ENCODE measurements at regions of chr5 and their contacts with region 1.

Region 1: DNA sequence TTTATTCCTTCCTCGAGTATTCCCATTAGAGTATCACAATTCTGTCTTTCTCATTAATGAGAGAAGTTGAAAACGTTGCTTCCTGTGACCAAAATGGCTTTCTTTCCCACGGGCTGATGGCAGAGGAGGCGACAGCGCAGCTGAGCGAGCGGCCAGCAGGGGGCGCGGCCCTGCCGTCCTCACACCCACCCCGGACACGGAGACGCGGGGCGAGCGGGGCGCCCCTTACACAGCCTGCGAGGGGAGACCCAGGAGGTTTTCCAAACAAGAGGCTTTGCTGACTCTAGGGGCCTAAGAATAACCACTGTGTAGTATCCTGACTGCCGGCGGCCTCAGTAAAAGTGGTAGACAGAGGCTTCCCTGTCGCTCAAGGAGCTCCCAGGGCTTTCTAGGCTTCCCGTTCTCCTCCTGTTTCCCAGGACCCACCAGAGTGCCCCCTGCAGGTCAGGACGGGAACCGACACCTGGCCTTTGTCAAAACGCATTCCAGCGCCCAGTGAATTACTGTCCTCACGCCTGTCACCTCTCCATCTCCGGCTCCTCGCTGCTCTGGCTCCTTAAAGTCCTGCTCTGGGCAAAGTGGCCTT is 27.3 kb upstream of the FGF1 start:
- DNase-seq: peak; percentile 70 to 89
- ATAC-seq: peak; percentile 89 to 93
- H3K4me3 ChIP-seq: peak overlapping the region; percentile 49
- H3K27ac ChIP-seq: peak overlapping the region; percentile 82 to 92
- H3K4me1 ChIP-seq: peaks cover 5% of the 10 kb centered on the region; the same call in 2 of the 3 replicates
- CTCF ChIP-seq: peak; percentile 100
- EP300 ChIP-seq: no peak
- POLR2A ChIP-seq: no peak
- RAD21 ChIP-seq: peak; percentile 43 to 78

Region 2: GRCh38 chr5:142618130-142618523 is 95.1 kb before region 1 on chr5:
- CTCF ChIA-PET with region 1: interaction called, 212 read pairs
- POLR2A ChIA-PET with region 1: no interaction called
- DNase-seq: no peak
- ATAC-seq: no peak
- H3K4me3 ChIP-seq: no peak overlapping the region
- H3K27ac ChIP-seq: no peak overlapping the region
- H3K4me1 ChIP-seq: peaks cover 9% of the 10 kb centered on the region
- CTCF ChIP-seq: no peak
- EP300 ChIP-seq: no peak
- POLR2A ChIP-seq: no peak
- RAD21 ChIP-seq: no peak

Region 3: GRCh38 chr5:142655339-142656267 is 57.6 kb before region 1 on chr5:
- CTCF ChIA-PET with region 1: interaction called, 104 read pairs
- POLR2A ChIA-PET with region 1: interaction called, 5 read pairs
- DNase-seq: peak; percentile 71 to 81
- ATAC-seq: peak; percentile 95 to 98
- H3K4me3 ChIP-seq: no peak overlapping the region
- H3K27ac ChIP-seq: no peak overlapping the region
- H3K4me1 ChIP-seq: peaks cover 4% of the 10 kb centered on the region; the same call in 1 of the 3 replicates
- CTCF ChIP-seq: peak; percentile 98
- EP300 ChIP-seq: no peak
- POLR2A ChIP-seq: no peak
- RAD21 ChIP-seq: peak; percentile 97

Region 4: DNA sequence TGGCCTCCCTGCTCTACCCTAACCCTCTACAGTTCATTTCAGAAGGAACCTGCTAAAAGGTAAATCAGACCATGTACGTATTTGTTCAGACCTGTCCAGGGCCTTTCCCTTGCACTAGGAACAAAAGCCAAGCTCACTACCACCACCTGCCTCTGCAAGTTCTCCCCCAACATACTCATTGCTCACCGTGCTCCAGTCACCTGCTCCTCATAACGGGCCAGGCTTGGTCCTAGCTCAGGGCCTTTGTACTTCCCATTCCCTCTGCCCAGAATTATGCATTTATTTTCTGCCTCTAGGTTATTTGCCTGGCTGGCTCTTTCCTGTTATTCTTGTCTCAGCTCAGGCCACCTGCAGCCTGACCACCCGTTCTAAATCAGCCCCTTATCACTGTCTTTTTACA is 22.5 kb before region 1 on chr5:
- CTCF ChIA-PET with region 1: interaction called, 146 read pairs
- POLR2A ChIA-PET with region 1: no interaction called
- DNase-seq: no peak
- ATAC-seq: no peak
- H3K4me3 ChIP-seq: no peak overlapping the region
- H3K27ac ChIP-seq: no peak overlapping the region
- H3K4me1 ChIP-seq: no peaks in the 10 kb centered on the region
- CTCF ChIP-seq: no peak
- EP300 ChIP-seq: no peak
- POLR2A ChIP-seq: no peak
- RAD21 ChIP-seq: no peak

Region 5: DNA sequence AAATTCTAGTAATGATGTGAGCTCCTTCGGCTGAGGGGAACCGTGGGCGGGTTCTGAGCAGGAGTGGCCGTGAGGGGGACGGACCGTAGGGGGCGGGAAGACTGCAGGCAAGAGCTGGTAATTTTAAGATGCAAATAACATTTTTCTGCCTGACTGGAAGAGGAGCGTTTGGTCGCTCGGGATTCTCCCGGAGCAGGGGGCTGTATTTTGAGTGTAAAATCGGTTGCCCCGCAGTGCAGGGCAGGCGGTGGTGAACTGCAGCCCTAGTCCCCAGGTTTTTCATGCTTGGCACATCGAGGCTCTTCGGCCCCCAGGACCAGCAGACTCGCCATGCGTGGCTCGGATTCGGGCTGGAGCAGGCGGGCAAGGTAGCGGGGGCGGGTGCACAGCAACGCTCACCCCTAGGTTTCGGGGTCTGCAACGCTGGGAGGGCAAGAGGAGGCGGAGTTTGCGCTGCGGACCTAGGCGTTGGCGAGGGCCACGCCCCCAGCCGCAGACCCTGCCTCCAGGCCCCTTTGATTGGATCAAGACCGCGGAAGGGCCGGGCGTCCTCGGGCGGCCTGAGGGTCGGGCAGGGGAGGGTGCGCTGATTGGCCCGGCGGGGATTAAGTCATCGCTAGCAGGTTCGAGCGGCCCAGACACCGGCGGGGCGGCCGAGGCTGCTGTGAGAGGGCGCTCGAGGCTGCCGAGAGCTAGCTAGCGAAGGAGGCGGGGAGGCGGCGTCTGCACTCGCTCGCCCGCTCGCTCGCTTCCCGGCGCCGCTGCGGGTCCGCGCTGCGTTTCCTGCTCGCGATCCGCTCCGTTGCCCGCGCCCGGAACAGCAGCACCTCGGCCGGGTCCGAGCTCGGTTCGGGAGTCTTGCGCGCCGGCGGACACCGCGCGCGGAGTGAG is 56.8 kb after region 1 on chr5 and contains the start of gene ARHGAP26:
- CTCF ChIA-PET with region 1: interaction called, 122 read pairs
- POLR2A ChIA-PET with region 1: no interaction called
- DNase-seq: peak; percentile 93 to 95
- ATAC-seq: peak; percentile 91 to 98
- H3K4me3 ChIP-seq: peak within 1 kb of the TSS; percentile 74
- H3K27ac ChIP-seq: peak within 1 kb of the TSS; percentile 72 to 86
- H3K4me1 ChIP-seq: peaks cover 21% of the 10 kb centered on the region; the same call in 2 of the 3 replicates
- CTCF ChIP-seq: no peak; the same call in 1 of the 3 replicates
- EP300 ChIP-seq: no peak
- POLR2A ChIP-seq: peak; percentile 93
- RAD21 ChIP-seq: peak; percentile 52 to 66
- polyA plus RNA-seq, gene ARHGAP26: 19.1 and 29.8 TPM in 2 replicates

Region 6: GRCh38 chr5:142900927-142901326 is 187.7 kb after region 1 on chr5:
- CTCF ChIA-PET with region 1: interaction called, 24 read pairs
- POLR2A ChIA-PET with region 1: no interaction called
- DNase-seq: no peak
- ATAC-seq: no peak
- H3K4me3 ChIP-seq: no peak overlapping the region
- H3K27ac ChIP-seq: no peak overlapping the region
- H3K4me1 ChIP-seq: no peaks in the 10 kb centered on the region
- CTCF ChIP-seq: no peak
- EP300 ChIP-seq: no peak
- POLR2A ChIP-seq: no peak
- RAD21 ChIP-seq: no peak

Measured in A549 (cell line).